IMR-90 (cell line): ENCODE measurements at regions of chr6 and their contacts with region 1.

Region 1: DNA sequence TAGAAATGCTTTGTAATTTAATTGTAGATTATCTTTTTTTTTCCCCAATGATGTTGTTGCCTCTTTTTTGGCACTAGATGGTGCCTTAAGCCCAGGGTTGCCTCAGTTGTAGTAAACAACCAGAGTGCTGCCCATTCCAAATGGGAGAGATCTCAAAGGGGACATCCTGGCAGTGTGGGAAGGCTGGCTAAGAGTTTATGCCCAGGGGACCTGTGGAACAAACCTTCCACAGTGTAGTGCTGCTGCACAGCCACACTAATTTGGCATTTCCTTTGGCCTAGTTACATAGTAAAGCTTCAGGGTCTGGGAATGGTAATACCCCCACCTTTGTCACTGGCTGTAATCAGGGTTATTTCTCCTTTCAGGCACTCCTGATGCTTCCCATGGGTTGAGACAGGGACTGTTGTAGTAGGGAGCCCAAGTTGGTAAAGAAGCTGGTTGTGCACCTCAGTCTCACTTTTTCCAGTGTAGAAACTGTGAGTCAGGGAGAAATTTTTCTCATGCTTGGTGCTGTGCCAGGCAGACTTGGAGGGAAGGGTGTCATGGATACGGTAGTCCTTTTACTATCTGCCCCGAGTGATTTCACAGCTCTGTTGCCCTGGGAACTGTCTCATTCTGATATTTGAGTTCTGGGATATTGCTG is 177.8 kb upstream of the ECI2 start:
- DNase-seq: peak; percentile 92
- ATAC-seq: peak; percentile 76
- H3K4me3 ChIP-seq: peak overlapping the region; percentile 1; the same call in 1 of the 2 replicates
- H3K27ac ChIP-seq: peak overlapping the region; percentile 46
- H3K4me1 ChIP-seq: peaks cover 12% of the 10 kb centered on the region
- H3K27me3 ChIP-seq: no peaks in the 10 kb centered on the region
- CTCF ChIP-seq: peak; percentile 88
- POLR2A ChIP-seq: peak; percentile 50; the same call in 1 of the 2 replicates
- RAD21 ChIP-seq: peak; percentile 99

Region 2: GRCh38 chr6:4323322-4323721 is 10.2 kb after region 1 on chr6:
- CTCF ChIA-PET with region 1: no interaction called
- POLR2A ChIA-PET with region 1: no interaction called
- dilution Hi-C with region 1: no loop called
- in situ Hi-C with region 1: no loop called
- intact Hi-C with region 1: no loop called
- DNase-seq: no peak
- ATAC-seq: no peak
- H3K4me3 ChIP-seq: no peak overlapping the region
- H3K27ac ChIP-seq: no peak overlapping the region
- H3K4me1 ChIP-seq: peaks cover 14% of the 10 kb centered on the region
- H3K27me3 ChIP-seq: no peaks in the 10 kb centered on the region
- CTCF ChIP-seq: no peak
- POLR2A ChIP-seq: no peak
- RAD21 ChIP-seq: no peak

Region 3: GRCh38 chr6:4581796-4582385 is 268.7 kb after region 1 on chr6:
- CTCF ChIA-PET with region 1: no interaction called
- POLR2A ChIA-PET with region 1: no interaction called
- dilution Hi-C with region 1: no loop called
- in situ Hi-C with region 1: no loop called
- intact Hi-C with region 1: loop called (anchors 2 kb)
- DNase-seq: peak; percentile 95
- ATAC-seq: peak; percentile 90
- H3K4me3 ChIP-seq: no peak overlapping the region
- H3K27ac ChIP-seq: peak overlapping the region; percentile 87
- H3K4me1 ChIP-seq: peaks cover 19% of the 10 kb centered on the region
- H3K27me3 ChIP-seq: no peaks in the 10 kb centered on the region
- CTCF ChIP-seq: no peak
- POLR2A ChIP-seq: no peak
- RAD21 ChIP-seq: peak; percentile 1; the same call in 1 of the 2 replicates

Region 4: GRCh38 chr6:4805553-4806336 is 492.6 kb after region 1 on chr6:
- CTCF ChIA-PET with region 1: no interaction called
- POLR2A ChIA-PET with region 1: no interaction called
- dilution Hi-C with region 1: no loop called
- in situ Hi-C with region 1: no loop called
- intact Hi-C with region 1: loop called (anchors 10 kb)
- DNase-seq: peak; percentile 35
- ATAC-seq: peak; percentile 55
- H3K4me3 ChIP-seq: no peak overlapping the region
- H3K27ac ChIP-seq: no peak overlapping the region
- H3K4me1 ChIP-seq: peaks cover 8% of the 10 kb centered on the region
- H3K27me3 ChIP-seq: no peaks in the 10 kb centered on the region
- CTCF ChIP-seq: peak; percentile 53
- POLR2A ChIP-seq: no peak
- RAD21 ChIP-seq: peak; percentile 56

Region 5: DNA sequence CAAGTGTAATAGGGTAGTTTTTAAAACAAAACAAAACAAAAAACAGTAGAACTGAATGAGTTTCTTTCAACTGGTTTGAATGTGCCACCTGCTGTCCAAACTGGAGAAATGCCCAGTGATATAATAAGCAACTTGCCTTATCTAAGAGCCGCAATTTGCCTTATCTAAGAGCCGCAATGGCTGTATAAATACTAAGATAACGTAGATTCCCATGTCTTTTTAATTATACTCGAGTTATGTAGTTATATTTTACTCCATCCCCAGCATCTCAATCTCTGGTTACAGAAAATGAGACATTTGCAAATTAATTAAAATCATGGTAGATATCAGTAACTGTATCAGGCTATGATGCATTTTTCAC is 623.5 kb after region 1 on chr6:
- CTCF ChIA-PET with region 1: interaction called, 3 read pairs
- POLR2A ChIA-PET with region 1: no interaction called
- dilution Hi-C with region 1: no loop called
- in situ Hi-C with region 1: loop called (anchors 5 kb)
- intact Hi-C with region 1: loop called (anchors 1 kb)
- DNase-seq: peak; percentile 80
- ATAC-seq: peak; percentile 69
- H3K4me3 ChIP-seq: no peak overlapping the region
- H3K27ac ChIP-seq: no peak overlapping the region
- H3K4me1 ChIP-seq: peaks cover 12% of the 10 kb centered on the region
- H3K27me3 ChIP-seq: no peaks in the 10 kb centered on the region
- CTCF ChIP-seq: peak; percentile 72
- POLR2A ChIP-seq: no peak
- RAD21 ChIP-seq: peak; percentile 76

Region 6: GRCh38 chr6:5030596-5031136 is 717.5 kb after region 1 on chr6:
- CTCF ChIA-PET with region 1: interaction called, 3 read pairs
- POLR2A ChIA-PET with region 1: no interaction called
- dilution Hi-C with region 1: no loop called
- in situ Hi-C with region 1: no loop called
- intact Hi-C with region 1: loop called (anchors 1 kb)
- DNase-seq: peak; percentile 78
- ATAC-seq: peak; percentile 48
- H3K4me3 ChIP-seq: no peak overlapping the region
- H3K27ac ChIP-seq: no peak overlapping the region
- H3K4me1 ChIP-seq: peaks cover 6% of the 10 kb centered on the region; the same call in 1 of the 2 replicates
- H3K27me3 ChIP-seq: no peaks in the 10 kb centered on the region
- CTCF ChIP-seq: peak; percentile 66
- POLR2A ChIP-seq: no peak
- RAD21 ChIP-seq: peak; percentile 73

Region 7: DNA sequence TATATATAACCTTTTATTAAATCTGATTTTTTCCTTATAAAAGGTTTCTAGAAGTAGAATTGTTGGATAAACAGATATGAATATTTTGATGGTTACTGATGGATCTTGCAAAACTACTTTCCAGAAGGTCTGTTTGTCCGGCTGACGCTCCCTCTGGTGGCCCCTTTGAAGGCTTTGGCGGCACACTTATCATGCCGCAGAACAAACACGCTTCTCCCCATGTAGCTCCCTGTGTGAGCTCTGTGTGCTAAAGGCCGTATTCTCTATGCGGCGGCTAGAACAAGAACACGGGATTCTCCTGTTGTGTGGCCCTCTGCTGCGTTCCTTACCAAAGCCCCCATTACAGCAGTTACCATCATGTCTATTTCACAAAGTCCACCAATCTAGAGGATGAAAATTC is 802.0 kb after region 1 on chr6:
- CTCF ChIA-PET with region 1: no interaction called
- POLR2A ChIA-PET with region 1: no interaction called
- dilution Hi-C with region 1: no loop called
- in situ Hi-C with region 1: no loop called
- intact Hi-C with region 1: loop called (anchors 1 kb)
- DNase-seq: peak; percentile 31
- ATAC-seq: peak; percentile 52; the same call in 1 of the 2 replicates
- H3K4me3 ChIP-seq: no peak overlapping the region
- H3K27ac ChIP-seq: no peak overlapping the region
- H3K4me1 ChIP-seq: peaks cover 2% of the 10 kb centered on the region; the same call in 1 of the 2 replicates
- H3K27me3 ChIP-seq: no peaks in the 10 kb centered on the region; the same call in none of the 2 replicates
- CTCF ChIP-seq: peak; percentile 21; the same call in 1 of the 2 replicates
- POLR2A ChIP-seq: no peak
- RAD21 ChIP-seq: 0 out of 2 replicates have a peak, but pooled peaks have one; percentile 15

Region 8: GRCh38 chr6:5398530-5398929 is 1085.4 kb after region 1 on chr6:
- CTCF ChIA-PET with region 1: no interaction called
- POLR2A ChIA-PET with region 1: no interaction called
- dilution Hi-C with region 1: no loop called
- in situ Hi-C with region 1: loop called (anchors 10 kb)
- intact Hi-C with region 1: loop called (anchors 5 kb)
- DNase-seq: peak; percentile 61
- ATAC-seq: peak; percentile 83
- H3K4me3 ChIP-seq: no peak overlapping the region
- H3K27ac ChIP-seq: no peak overlapping the region
- H3K4me1 ChIP-seq: no peaks in the 10 kb centered on the region
- H3K27me3 ChIP-seq: no peaks in the 10 kb centered on the region
- CTCF ChIP-seq: peak; percentile 56
- POLR2A ChIP-seq: no peak
- RAD21 ChIP-seq: peak; percentile 50